Right ventricle myocardium superior (tissue), 1 donor: ENCODE measurements at regions of chr2 and their contacts with region 1.

Region 1: DNA sequence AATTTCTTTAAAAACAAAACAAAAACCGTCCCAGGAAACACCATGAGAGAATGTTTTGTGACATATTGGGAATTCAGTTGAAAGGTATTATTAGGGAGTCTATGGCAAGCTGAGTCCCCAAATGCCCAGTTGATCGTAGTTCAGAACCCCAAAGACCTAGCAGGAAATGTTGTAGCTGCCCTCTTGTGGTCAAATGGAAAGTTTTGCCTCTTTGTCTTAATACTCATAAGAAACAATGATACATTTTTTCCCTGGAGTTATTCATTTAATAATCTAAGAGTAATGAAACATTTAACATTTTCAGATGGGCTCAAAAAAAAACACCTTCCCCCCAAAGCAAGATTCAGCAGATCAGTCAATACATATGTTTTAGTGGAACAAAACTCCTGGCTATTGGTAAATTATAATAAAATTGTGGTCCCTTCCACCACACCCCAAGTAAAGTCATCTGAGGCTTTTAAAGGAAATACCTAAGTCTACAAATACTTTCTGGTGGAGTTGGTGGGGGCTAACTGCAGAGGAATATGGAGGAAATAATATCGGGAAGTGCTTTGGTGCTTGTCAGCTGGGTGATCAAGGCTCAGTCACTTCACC is 37.8 kb upstream of the EFEMP1 start:
- DNase-seq: no peak
- ATAC-seq: peak; percentile 55

Region 2: DNA sequence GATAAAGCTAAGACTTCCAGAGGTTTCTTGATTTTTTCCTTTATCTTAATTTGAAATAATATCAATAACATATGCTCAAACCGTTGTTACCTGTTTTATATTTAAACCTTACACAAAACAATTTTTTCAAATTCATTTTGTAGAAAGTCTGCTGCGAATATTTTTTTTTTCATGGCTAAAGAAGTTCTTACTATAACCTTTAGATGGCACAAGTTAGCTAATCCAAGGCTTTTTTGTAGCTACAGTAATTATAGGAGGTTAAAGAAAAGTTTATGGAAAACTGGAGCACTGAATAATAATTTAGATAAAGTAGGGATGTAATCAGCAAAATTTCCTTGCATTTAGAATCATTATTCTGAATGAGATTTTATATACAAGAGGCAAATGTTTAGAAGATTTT is 189.8 kb before region 1 on chr2:
- intact Hi-C with region 1: loop called (anchors 5 kb)
- DNase-seq: no peak
- ATAC-seq: peak; percentile 55